Activated naive CD8-positive, alpha-beta T cell treated with anti-CD3 and anti-CD28 coated beads, Interleukin-2, amount 10 ng/mL, durations not matched to agents 7 days and 5 days (primary cell): ENCODE measurements at regions of chr9 and their contacts with region 1.

Region 1: GRCh38 chr9:78031893-78032729 is 500 bp upstream of the GNAQ start:
- DNase-seq: peak; percentile 77
- ATAC-seq: peak; percentile 52
- H3K4me3 Mint-ChIP-seq: peak overlapping the region; percentile 90
- H3K27ac Mint-ChIP-seq: peak overlapping the region; percentile 93
- H3K4me1 Mint-ChIP-seq: peaks cover 47% of the 10 kb centered on the region
- H3K27me3 Mint-ChIP-seq: peaks cover 5% of the 10 kb centered on the region

Region 2: GRCh38 chr9:77944556-77945243 is 87.4 kb before region 1 on chr9:
- POLR2A ChIA-PET with region 1: no interaction called
- DNase-seq: no peak
- ATAC-seq: peak; percentile 50
- H3K4me3 Mint-ChIP-seq: peak overlapping the region; percentile 56
- H3K27ac Mint-ChIP-seq: peak overlapping the region; percentile 57
- H3K4me1 Mint-ChIP-seq: peaks cover 26% of the 10 kb centered on the region
- H3K27me3 Mint-ChIP-seq: no peaks in the 10 kb centered on the region

Region 3: GRCh38 chr9:77977210-77977611 is 54.9 kb before region 1 on chr9:
- POLR2A ChIA-PET with region 1: interaction called, 28 read pairs
- DNase-seq: peak; percentile 66
- ATAC-seq: peak; percentile 56
- H3K4me3 Mint-ChIP-seq: peak overlapping the region; percentile 10
- H3K27ac Mint-ChIP-seq: peak overlapping the region; percentile 50
- H3K4me1 Mint-ChIP-seq: peaks cover 49% of the 10 kb centered on the region
- H3K27me3 Mint-ChIP-seq: no peaks in the 10 kb centered on the region

Region 4: GRCh38 chr9:78187763-78188484 is 155.8 kb after region 1 on chr9:
- POLR2A ChIA-PET with region 1: no interaction called
- DNase-seq: no peak
- ATAC-seq: no peak
- H3K4me3 Mint-ChIP-seq: no peak overlapping the region
- H3K27ac Mint-ChIP-seq: no peak overlapping the region
- H3K4me1 Mint-ChIP-seq: peaks cover 3% of the 10 kb centered on the region
- H3K27me3 Mint-ChIP-seq: peaks cover 3% of the 10 kb centered on the region